BJ (cell line): ENCODE measurements at regions of chr7 and their contacts with region 1.

Region 1: DNA sequence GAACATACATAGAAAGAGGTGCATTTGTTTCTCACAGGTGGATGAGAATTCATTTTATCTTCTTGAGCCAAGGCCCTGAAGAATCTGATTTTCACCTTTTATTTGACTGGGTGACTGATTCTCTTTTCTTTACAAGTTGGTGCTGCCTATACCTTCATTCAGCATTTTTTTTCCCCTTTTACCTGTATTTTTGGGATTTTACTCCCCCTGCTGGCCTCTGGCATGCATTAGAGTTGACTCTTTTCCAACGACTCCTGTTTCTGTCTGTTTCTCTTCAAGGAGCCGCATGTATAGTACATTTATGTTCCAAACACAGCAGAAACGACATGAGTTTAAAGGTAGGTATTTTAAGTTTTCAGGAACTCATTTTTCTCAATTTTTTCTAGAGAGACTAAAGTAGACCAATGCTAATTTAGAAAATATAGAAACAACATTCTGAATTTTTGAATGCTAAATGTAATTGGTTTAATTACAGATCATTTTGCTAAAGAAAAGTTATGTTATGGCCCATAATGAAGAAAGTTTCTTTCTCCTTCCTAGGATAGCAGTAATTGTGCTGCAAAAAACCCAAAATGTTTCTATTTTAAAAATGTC is 149.8 kb upstream of the HDAC9 start:
- DNase-seq: no peak
- H3K4me3 ChIP-seq: no peak overlapping the region
- H3K27me3 ChIP-seq: no peaks in the 10 kb centered on the region
- CTCF ChIP-seq: peak; percentile 85

Region 2: GRCh38 chr7:17680943-17681351 is 664.8 kb before region 1 on chr7:
- CTCF ChIA-PET with region 1: interaction called, 39 read pairs
- POLR2A ChIA-PET with region 1: no interaction called
- DNase-seq: no peak
- H3K4me3 ChIP-seq: no peak overlapping the region
- H3K27me3 ChIP-seq: no peaks in the 10 kb centered on the region
- CTCF ChIP-seq: 0 out of 2 replicates have a peak, but pooled peaks have one; percentile 20

Region 3: DNA sequence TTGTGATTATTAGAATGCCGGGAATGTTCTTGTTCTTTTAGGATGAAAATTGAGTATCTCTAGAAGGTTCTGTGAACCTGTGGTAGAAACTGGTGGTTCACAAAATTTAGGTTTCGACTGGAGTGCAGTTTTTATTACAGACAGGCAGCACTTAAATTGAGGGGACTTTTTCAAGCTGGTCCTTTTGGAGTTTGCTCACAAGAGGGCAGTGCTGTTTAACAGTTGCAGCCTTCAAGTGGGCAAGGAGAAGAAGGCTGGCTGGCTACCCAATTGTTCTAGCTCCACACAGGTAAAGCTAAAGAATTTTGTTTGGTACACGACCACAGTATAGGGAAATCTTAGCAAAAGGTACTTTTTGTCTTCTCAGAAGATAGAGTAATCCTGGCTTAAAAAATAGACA is 639.0 kb before region 1 on chr7:
- CTCF ChIA-PET with region 1: interaction called, 14 read pairs
- POLR2A ChIA-PET with region 1: no interaction called
- DNase-seq: peak; percentile 16
- H3K4me3 ChIP-seq: no peak overlapping the region
- H3K27me3 ChIP-seq: peaks cover 1% of the 10 kb centered on the region; the same call in 1 of the 2 replicates
- CTCF ChIP-seq: peak; percentile 77

Region 4: GRCh38 chr7:17769918-17770317 is 575.8 kb before region 1 on chr7:
- CTCF ChIA-PET with region 1: interaction called, 12 read pairs
- POLR2A ChIA-PET with region 1: interaction called, 8 read pairs
- DNase-seq: no peak
- H3K4me3 ChIP-seq: no peak overlapping the region
- H3K27me3 ChIP-seq: peaks cover 1% of the 10 kb centered on the region; the same call in 1 of the 2 replicates
- CTCF ChIP-seq: peak; percentile 83

Region 5: GRCh38 chr7:18290223-18290622 is 55.5 kb before region 1 on chr7:
- CTCF ChIA-PET with region 1: no interaction called
- POLR2A ChIA-PET with region 1: no interaction called
- DNase-seq: no peak
- H3K4me3 ChIP-seq: no peak overlapping the region
- H3K27me3 ChIP-seq: no peaks in the 10 kb centered on the region; the same call in 1 of the 2 replicates
- CTCF ChIP-seq: no peak

Region 6: DNA sequence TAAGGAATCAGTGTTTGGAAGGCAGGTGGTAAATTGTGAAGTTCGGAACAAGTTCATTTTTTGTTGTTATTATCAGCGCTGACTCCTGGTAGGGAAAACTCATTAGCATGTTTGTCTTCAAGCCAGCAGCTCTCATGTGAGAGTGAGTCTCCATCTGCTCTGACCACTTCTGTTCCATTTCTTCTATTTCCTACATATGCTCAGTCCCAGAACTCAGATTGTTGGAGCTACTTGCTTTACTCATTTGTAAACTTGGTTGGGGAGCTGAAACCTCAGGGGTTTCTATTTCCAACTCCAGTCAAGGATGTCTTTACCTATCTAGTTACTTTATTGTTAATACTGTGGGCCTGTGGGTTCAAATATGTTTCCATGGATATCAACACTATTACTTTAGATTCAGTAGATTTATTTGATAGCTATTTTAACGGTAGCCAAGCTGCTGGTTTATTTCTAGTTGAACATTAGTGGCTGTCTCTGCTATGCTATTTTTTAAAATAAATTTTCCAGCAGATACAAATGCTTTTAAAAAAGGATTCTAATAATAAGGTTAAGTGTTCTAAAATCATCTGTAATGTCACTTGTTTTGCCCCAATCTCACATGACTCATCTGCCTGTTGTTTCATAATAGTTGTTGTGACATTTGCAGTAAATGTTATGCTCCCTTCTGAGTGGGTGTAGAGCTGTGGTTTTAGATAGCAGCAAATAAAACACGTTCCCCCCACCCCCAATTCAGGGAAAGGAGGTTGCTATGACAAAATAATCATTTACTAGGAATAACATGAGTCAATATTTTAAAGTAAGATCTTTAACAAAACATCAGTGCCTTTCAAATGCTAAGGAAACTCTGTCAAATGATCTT is 293.1 kb after region 1 on chr7:
- CTCF ChIA-PET with region 1: no interaction called
- POLR2A ChIA-PET with region 1: no interaction called
- DNase-seq: peak; percentile 86
- H3K4me3 ChIP-seq: no peak overlapping the region
- H3K27me3 ChIP-seq: no peaks in the 10 kb centered on the region
- CTCF ChIP-seq: no peak